Kidney (tissue), 22 donors: ENCODE measurements at regions of chr6 and their contacts with region 1.

Region 1: GRCh38 chr6:30883685-30884520 is at the start of gene DDR1:
- DNase-seq: peak; percentile 88 to 94 (median 93)
- H3K4me3 ChIP-seq: peak within 1 kb of the TSS; percentile 60 to 85 (median 83)
- H3K27ac ChIP-seq: peak within 1 kb of the TSS; percentile 94 to 97
- H3K4me1 ChIP-seq: peaks cover 12 to 41% (median 23%) of the 10 kb centered on the region in 3 donors
- H3K27me3 ChIP-seq: no peaks in the 10 kb centered on the region
- CTCF ChIP-seq: no peak
- total RNA-seq, gene DDR1: 362 TPM

Region 2: DNA sequence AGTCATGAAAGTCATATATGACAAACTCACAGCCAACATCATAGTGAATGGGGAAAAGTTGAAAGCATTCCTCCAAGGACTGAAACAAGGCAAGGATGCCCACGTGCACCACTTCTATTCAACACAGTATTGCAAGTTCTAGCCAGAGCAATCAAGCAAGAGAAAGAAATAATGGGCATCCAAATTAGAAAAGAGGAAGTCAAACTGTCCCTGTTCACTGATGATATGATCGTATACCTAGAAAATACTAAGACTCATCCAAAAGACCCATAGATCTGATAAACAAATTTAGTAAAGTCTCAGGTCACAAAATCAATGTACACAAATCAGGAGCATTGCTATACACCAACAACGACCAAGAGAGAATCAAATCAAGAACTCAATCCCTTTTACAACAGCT is 497.7 kb before region 1 on chr6:
- intact Hi-C with region 1: no loop called
- DNase-seq: no peak
- H3K4me3 ChIP-seq: no peak overlapping the region
- H3K27ac ChIP-seq: no peak overlapping the region
- H3K4me1 ChIP-seq: no peaks in the 10 kb centered on the region
- H3K27me3 ChIP-seq: peaks cover 5% of the 10 kb centered on the region
- CTCF ChIP-seq: no peak

Region 3: GRCh38 chr6:30571769-30572095 is 312.2 kb before region 1 on chr6:
- intact Hi-C with region 1: no loop called
- DNase-seq: no peak
- H3K4me3 ChIP-seq: peak overlapping the region; percentile 90 to 92 (median 90)
- H3K27ac ChIP-seq: peak overlapping the region; percentile 96 to 97
- H3K4me1 ChIP-seq: peaks cover 0 to 29% (median 24%) of the 10 kb centered on the region in 3 donors
- H3K27me3 ChIP-seq: no peaks in the 10 kb centered on the region
- CTCF ChIP-seq: no peak

Region 4: DNA sequence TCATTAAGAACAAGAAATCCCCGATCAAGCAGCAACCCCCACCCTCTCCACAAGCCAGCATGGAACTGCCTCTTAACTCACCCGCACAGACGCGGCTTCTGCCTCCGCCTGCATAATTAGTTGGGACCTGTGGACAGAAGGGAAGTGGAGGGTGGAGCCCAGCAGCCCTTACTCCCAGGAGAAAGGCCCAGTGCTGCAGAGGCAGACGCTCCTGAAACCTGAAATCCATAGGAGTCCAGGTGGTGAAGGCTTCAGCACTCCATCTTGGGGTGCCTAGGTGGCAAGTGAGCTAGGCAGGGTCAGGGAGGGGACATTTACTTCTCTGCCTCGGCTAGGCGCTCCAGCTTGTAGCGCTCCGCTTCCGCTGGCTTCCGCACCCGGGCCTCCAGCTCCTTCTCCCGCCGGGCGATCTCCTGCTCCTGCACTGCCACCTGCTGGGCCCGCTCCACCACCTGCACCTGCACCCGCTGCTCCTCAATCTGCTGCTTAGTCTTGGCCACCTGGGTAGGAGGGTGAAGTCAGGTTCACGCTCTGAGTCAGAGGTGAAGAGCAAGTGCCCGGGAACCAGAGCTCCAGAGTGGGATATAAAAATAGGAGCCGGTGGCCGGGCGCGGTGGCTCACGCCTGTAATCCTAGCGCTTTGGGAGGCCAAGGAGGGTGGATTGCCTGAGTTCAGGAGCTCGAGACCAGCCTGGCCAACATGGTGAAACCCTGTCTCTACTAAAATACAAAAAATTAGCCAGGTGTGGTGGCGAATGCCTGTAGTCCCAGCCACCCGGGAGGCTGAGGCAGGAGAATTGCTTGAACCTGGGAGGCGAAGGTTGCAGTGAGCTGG is 153.1 kb before region 1 on chr6:
- intact Hi-C with region 1: loop called (anchors 10 kb)
- DNase-seq: peak; percentile 89 to 92 (median 90)
- H3K4me3 ChIP-seq: peak overlapping the region in 1 of 3 donors; percentile 19
- H3K27ac ChIP-seq: no peak overlapping the region
- H3K4me1 ChIP-seq: peaks cover 0 to 11% (median 0%) of the 10 kb centered on the region in 3 donors
- H3K27me3 ChIP-seq: no peaks in the 10 kb centered on the region
- CTCF ChIP-seq: peak; percentile 76

Region 5: GRCh38 chr6:31110825-31111582 is 227.1 kb after region 1 on chr6:
- intact Hi-C with region 1: no loop called
- DNase-seq: no peak
- H3K4me3 ChIP-seq: no peak overlapping the region
- H3K27ac ChIP-seq: no peak overlapping the region
- H3K4me1 ChIP-seq: peaks cover 0 to 2% (median 0%) of the 10 kb centered on the region in 3 donors
- H3K27me3 ChIP-seq: no peaks in the 10 kb centered on the region
- CTCF ChIP-seq: no peak

Region 6: DNA sequence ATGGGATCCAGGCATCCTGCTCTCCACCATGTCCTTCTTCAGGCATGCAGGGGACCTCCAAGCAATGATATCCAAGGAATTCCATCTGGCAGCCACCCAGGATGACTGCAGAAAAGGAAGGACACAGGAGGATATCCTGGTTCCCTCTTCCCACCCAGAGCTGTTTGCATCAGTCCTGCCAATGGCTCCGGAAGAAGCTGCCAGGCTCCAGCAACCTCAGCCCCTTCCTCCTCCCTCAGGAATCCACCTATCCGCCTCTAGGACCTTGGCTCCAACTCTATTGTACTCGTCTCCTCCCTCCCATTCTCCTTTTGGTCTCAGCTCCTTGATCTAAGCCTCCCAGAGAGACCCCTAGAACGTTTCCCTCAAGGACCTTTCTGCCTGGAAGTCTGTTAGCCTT is 255.7 kb after region 1 on chr6:
- intact Hi-C with region 1: no loop called
- DNase-seq: peak in 2 of 5 donors; percentile 24 to 51
- H3K4me3 ChIP-seq: no peak overlapping the region
- H3K27ac ChIP-seq: no peak overlapping the region
- H3K4me1 ChIP-seq: peaks cover 0 to 6% (median 3%) of the 10 kb centered on the region in 3 donors
- H3K27me3 ChIP-seq: no peaks in the 10 kb centered on the region
- CTCF ChIP-seq: no peak